ENCODE measurements at regions of chr10 and their contacts with region 1.

Region 1: GRCh38 chr10:95561182-95562075 is at the start of gene SORBS1:
- DNase-seq: peak; percentile 91
- H3K4me3 ChIP-seq: peak within 1 kb of the TSS; percentile 86
- H3K27ac ChIP-seq: no peak within 1 kb of the TSS
- H3K4me1 ChIP-seq: no peaks in the 10 kb centered on the region
- CTCF ChIP-seq: no peak
- total RNA-seq, gene SORBS1: 0.10 and 0.57 TPM in 2 replicates

Region 2: DNA sequence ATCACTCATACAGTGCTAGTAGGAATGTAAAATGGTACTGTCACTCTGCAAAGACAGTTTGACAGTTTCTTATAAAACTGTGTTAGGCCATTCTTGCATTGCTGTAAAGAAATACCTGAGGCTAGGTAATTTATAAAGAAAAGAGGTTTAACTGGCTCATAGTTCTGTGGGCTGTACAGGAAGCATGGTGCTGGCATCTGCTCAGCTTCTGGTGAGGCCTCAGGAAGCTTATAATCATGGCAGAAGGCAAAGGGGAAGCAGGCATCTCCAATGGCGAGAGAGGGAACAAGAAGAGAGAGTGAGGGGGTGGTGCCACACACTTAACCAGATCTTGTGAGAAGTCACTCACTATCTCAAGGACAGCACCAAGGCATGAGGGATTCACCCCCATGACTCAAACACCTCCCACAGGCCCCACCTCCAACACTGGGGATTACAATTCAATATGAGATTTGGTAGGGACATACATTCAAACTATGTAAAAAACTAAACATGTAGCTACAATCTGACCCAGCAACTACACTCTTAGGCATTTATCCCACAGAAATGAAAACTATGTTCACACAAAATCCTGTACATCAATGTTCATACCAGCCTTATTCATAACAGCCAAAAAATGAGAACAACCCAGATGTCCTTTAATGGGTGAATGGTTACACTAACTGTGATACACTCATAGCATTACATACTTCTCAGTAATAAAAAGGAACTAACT is 90.1 kb after region 1 on chr10:
- CTCF ChIA-PET with region 1: no interaction called
- POLR2A ChIA-PET with region 1: no interaction called
- intact Hi-C with region 1: loop called (anchors 5 kb)
- DNase-seq: no peak
- H3K4me3 ChIP-seq: no peak overlapping the region
- H3K27ac ChIP-seq: no peak overlapping the region
- H3K4me1 ChIP-seq: peaks cover 14% of the 10 kb centered on the region
- CTCF ChIP-seq: no peak

Region 3: GRCh38 chr10:95841661-95842498 is 280.5 kb after region 1 on chr10:
- CTCF ChIA-PET with region 1: no interaction called
- POLR2A ChIA-PET with region 1: no interaction called
- intact Hi-C with region 1: no loop called
- DNase-seq: peak; percentile 83
- H3K4me3 ChIP-seq: peak overlapping the region; percentile 13
- H3K27ac ChIP-seq: peak overlapping the region; percentile 13
- H3K4me1 ChIP-seq: peaks cover 45% of the 10 kb centered on the region
- CTCF ChIP-seq: peak; percentile 100

Measured in OCI-LY7 (cell line).